ENCODE measurements at regions of chrX and their contacts with region 1.

Region 1: GRCh38 chrX:13646154-13646549 is 6.8 kb upstream of the TCEANC start:
- DNase-seq: peak in 2 of 3 donors; percentile 65 to 83
- ATAC-seq: peak; percentile 82
- H3K4me3 ChIP-seq: no peak overlapping the region
- H3K4me1 ChIP-seq: no peaks in the 10 kb centered on the region
- CTCF ChIP-seq: no peak

Region 2: GRCh38 chrX:13376857-13377549 is 269.1 kb before region 1 on chrX:
- intact Hi-C with region 1: loop called in 1 of 2 experiments (anchors 10 kb)
- DNase-seq: no peak
- ATAC-seq: peak; percentile 29
- H3K4me3 ChIP-seq: no peak overlapping the region
- H3K4me1 ChIP-seq: no peaks in the 10 kb centered on the region
- CTCF ChIP-seq: no peak

Region 3: DNA sequence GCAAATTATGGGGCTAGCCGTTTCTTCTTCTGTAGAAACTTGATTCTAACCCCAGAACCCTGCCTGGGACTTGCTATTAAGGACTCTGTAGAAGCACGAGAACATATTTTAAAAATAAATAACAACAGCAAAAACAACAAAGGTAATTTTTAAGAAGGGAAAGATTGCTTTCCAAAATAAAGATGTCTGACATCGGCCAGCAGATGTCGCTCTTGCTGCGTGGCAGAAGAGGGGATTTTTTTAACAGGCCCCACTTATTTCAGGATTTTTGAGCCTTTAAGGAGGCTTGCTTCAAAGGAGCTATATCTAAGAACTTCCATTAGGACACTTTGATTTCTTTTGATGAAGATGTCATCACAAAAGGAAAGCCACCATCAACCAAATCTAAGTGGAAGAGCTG is 139.6 kb before region 1 on chrX:
- intact Hi-C with region 1: loop called (anchors 5 to 10 kb)
- DNase-seq: peak in 1 of 3 donors; percentile 36
- ATAC-seq: no peak
- H3K4me3 ChIP-seq: no peak overlapping the region
- H3K4me1 ChIP-seq: no peaks in the 10 kb centered on the region
- CTCF ChIP-seq: peak; percentile 21

Region 4: GRCh38 chrX:13917507-13917906 is 271.4 kb after region 1 on chrX:
- intact Hi-C with region 1: no loop called
- DNase-seq: no peak
- ATAC-seq: no peak
- H3K4me3 ChIP-seq: no peak overlapping the region
- H3K4me1 ChIP-seq: no peaks in the 10 kb centered on the region
- CTCF ChIP-seq: no peak